ENCODE measurements at regions of chr2 and their contacts with region 1.

Region 1: GRCh38 chr2:147863835-147864234 is 19.0 kb downstream of the ACVR2A start:
- DNase-seq: no peak
- ATAC-seq: no peak
- H3K4me3 ChIP-seq: no peak overlapping the region
- H3K4me3 Mint-ChIP-seq: no peak overlapping the region
- H3K27ac ChIP-seq: no peak overlapping the region
- H3K27ac Mint-ChIP-seq: no peak overlapping the region
- H3K4me1 ChIP-seq: peaks cover 9 to 23% of the 10 kb centered on the region in 2 donors
- H3K4me1 Mint-ChIP-seq: peaks cover 4 to 50% (median 36%) of the 10 kb centered on the region in 7 donors
- H3K27me3 ChIP-seq: no peaks in the 10 kb centered on the region
- H3K27me3 Mint-ChIP-seq: peaks cover 0 to 3% (median 0%) of the 10 kb centered on the region in 5 donors

Region 2: DNA sequence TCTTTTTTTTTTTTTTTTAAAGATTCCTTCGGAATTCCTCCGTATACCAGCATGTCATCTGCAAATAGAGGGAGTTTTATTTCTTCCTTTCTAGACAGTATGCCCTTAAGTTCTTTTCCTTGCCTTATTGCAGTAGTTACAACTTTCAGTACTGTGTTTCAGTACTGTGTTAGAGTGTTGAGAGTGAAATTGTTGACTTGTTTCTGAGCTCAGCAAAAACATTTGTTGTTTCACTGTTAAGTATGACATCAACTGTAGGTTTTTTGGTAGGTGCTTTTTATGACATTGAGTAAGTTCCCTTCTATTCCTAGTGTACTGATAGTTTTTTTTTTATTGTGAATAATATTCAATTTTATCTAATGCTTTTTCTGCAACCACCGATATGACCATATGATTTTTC is 24.8 kb after region 1 on chr2:
- CTCF ChIA-PET with region 1: no interaction called
- POLR2A ChIA-PET with region 1: no interaction called
- intact Hi-C with region 1: loop called in 1 of 2 experiments (anchors 2 kb)
- DNase-seq: no peak
- ATAC-seq: no peak
- H3K4me3 ChIP-seq: no peak overlapping the region
- H3K4me3 Mint-ChIP-seq: no peak overlapping the region
- H3K27ac ChIP-seq: no peak overlapping the region
- H3K27ac Mint-ChIP-seq: no peak overlapping the region
- H3K4me1 ChIP-seq: peaks cover 0 to 10% of the 10 kb centered on the region in 2 donors
- H3K4me1 Mint-ChIP-seq: peaks cover 8 to 41% (median 28%) of the 10 kb centered on the region in 7 donors
- H3K27me3 ChIP-seq: no peaks in the 10 kb centered on the region
- H3K27me3 Mint-ChIP-seq: no peaks in the 10 kb centered on the region

Measured in naive thymus-derived CD4-positive, alpha-beta T cell (primary cell).